Heart left ventricle (tissue), 16 donors: ENCODE measurements at regions of chr2 and their contacts with region 1.

Region 1: DNA sequence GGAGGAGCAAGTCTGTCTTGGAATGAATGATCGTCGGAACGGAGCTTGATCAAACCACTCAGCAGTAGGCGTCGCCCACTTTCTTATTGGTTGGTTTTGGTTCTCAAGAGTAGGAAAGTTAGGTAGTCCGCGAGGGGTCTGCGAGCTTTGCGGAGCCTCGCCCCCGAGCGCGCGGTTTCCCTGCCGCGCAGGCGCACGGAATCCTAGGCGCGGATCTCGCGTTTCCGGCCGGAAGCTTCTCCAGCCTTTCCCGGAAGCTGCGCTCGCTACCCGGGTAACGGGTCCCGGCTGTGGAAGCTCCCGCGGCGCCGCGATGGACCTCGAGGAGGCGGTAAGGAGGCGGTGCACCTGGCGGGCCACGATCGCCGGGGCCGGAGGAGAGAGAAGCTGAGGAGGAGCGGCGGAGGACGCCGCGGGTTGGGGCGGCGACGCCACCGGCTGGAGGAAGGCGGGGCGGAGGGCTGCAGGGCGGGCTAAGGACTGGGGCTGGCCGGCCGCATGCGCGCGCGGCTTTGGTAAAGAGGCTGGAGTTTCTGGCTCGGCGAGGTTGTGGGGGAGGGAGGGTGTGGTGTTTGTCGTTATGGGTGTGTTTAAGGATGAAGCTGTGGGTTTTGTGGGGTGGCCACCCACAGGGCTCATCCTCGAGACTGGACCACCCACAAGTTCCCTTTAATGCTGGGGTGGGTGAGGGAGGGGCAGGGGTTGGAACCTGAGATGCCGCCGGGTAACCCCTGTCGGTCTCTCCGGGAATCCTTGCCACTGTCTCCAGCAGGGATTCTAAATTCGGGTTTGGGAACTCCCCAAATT is at the start of gene TAF1B:
- DNase-seq: peak; percentile 87 to 92 (median 88)
- ATAC-seq: peak; percentile 87 to 98 (median 96)
- H3K4me3 ChIP-seq: peak within 1 kb of the TSS; percentile 42 to 97 (median 71)
- H3K27ac ChIP-seq: peak within 1 kb of the TSS in 11 of 12 donors; percentile 69 to 96 (median 82)
- H3K4me1 ChIP-seq: peaks cover 0 to 38% (median 8%) of the 10 kb centered on the region in 12 donors
- H3K27me3 ChIP-seq: no peaks in the 10 kb centered on the region
- CTCF ChIP-seq: peak in 9 of 12 donors; percentile 6 to 74 (median 35)
- POLR2A ChIP-seq: peak in 1 of 2 donors; percentile 73
- total RNA-seq, gene TAF1B: 3.8 to 13.9 (median 5.2) TPM

Region 2: DNA sequence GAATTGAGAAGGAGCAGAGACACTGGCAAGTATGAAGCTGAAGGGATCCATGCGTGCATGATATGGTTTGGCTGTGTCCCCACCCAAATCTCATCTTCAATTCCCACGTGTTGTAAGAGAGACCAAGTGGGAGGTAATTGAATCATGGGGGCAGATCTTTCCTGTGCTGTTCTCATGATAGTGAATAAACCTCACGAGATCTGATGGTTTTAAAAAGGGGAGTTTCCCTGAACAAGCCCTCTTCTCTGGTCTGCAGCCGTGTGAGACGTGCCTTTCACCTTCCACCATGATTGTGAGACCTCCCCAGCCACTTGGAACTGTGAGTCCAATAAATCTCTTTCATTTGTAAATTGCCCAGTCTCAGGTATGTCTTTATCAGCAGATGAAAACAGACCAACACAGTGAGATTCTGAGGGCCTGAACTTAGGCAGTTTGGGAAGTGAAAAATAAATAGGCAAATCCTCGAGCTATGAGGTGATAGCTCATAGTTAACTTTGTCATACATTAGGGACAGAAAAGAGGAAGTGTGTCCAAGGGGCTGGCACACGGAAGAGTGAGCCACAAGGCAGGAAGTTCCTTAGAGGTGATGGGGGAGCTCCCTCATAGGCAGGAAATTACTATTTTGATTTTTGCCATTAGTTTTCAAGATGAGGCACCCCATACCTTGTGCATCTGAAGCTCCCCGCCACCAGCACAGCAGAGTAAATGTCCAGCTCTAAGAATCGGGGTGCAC is 1820.4 kb before region 1 on chr2:
- intact Hi-C with region 1: no loop called
- DNase-seq: no peak
- ATAC-seq: no peak
- H3K4me3 ChIP-seq: no peak overlapping the region
- H3K27ac ChIP-seq: peak overlapping the region in 1 of 12 donors; percentile 67
- H3K4me1 ChIP-seq: peaks cover 0 to 11% (median 0%) of the 10 kb centered on the region in 12 donors
- H3K27me3 ChIP-seq: no peaks in the 10 kb centered on the region
- CTCF ChIP-seq: no peak
- POLR2A ChIP-seq: no peak

Region 3: GRCh38 chr2:9951272-9951972 is 108.0 kb after region 1 on chr2 and contains the start of gene GRHL1:
- intact Hi-C with region 1: loop called in 2 of 10 experiments (anchors 5 to 10 kb)
- DNase-seq: peak; percentile 94 to 97 (median 95)
- ATAC-seq: peak; percentile 98
- H3K4me3 ChIP-seq: peak within 1 kb of the TSS; percentile 60 to 97 (median 78)
- H3K27ac ChIP-seq: peak within 1 kb of the TSS in 11 of 12 donors; percentile 4 to 75 (median 57)
- H3K4me1 ChIP-seq: peaks cover 0 to 15% (median 3%) of the 10 kb centered on the region in 12 donors
- H3K27me3 ChIP-seq: peaks cover 0 to 28% (median 0%) of the 10 kb centered on the region in 9 donors
- CTCF ChIP-seq: peak in 2 of 12 donors; percentile 3 to 30
- POLR2A ChIP-seq: peak in 1 of 2 donors; percentile 44
- total RNA-seq, gene GRHL1: 0.79 to 2.8 (median 1.1) TPM

Region 4: DNA sequence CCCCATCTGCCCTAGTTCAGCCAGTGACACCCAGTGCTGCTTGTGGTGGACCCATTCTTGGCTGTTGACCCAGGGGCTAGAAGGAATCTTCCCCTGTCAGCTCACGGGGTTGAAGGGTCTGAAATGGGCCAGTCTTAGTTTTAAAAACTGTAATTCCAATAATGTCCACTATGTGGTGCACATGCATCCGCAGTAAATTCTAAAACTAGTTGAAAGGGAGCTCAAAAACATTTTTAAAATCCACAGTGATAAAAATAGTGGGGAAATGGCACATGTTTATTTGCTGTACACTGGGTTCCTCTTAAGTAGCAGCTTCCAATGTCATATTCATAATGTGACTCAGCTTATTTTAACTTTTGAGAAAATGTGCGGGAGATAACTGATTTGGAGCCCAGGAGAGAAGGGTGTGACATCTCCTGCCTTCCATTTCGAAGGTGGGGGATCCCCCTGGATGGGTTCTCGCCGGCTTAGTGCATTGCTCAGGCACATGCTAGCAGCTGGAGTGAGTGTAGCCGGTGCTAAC is 140.8 kb after region 1 on chr2:
- intact Hi-C with region 1: loop called in 1 of 10 experiments (anchors 10 kb)
- DNase-seq: no peak
- ATAC-seq: peak; percentile 47 to 65 (median 53)
- H3K4me3 ChIP-seq: no peak overlapping the region
- H3K27ac ChIP-seq: peak overlapping the region in 3 of 12 donors; percentile 37 to 74 (median 47)
- H3K4me1 ChIP-seq: peaks cover 0 to 38% (median 18%) of the 10 kb centered on the region in 12 donors
- H3K27me3 ChIP-seq: no peaks in the 10 kb centered on the region
- CTCF ChIP-seq: peak; percentile 72 to 96 (median 86)
- POLR2A ChIP-seq: no peak

Region 5: GRCh38 chr2:10072656-10073480 is 229.4 kb after region 1 on chr2:
- intact Hi-C with region 1: no loop called
- DNase-seq: peak in 4 of 5 donors; percentile 79 to 88 (median 82)
- ATAC-seq: peak; percentile 76 to 94 (median 92)
- H3K4me3 ChIP-seq: no peak overlapping the region
- H3K27ac ChIP-seq: no peak overlapping the region
- H3K4me1 ChIP-seq: peaks cover 0 to 8% (median 0%) of the 10 kb centered on the region in 12 donors
- H3K27me3 ChIP-seq: peaks cover 0 to 24% (median 0%) of the 10 kb centered on the region in 9 donors
- CTCF ChIP-seq: peak; percentile 78 to 88 (median 83)
- POLR2A ChIP-seq: no peak